GM10248 (cell line): ENCODE measurements at regions of chr22 and their contacts with region 1.

Region 1: GRCh38 chr22:42889304-42889703 is 32.2 kb upstream of the ARFGAP3 start:
- DNase-seq: peak; percentile 86
- CTCF ChIP-seq: no peak

Region 2: DNA sequence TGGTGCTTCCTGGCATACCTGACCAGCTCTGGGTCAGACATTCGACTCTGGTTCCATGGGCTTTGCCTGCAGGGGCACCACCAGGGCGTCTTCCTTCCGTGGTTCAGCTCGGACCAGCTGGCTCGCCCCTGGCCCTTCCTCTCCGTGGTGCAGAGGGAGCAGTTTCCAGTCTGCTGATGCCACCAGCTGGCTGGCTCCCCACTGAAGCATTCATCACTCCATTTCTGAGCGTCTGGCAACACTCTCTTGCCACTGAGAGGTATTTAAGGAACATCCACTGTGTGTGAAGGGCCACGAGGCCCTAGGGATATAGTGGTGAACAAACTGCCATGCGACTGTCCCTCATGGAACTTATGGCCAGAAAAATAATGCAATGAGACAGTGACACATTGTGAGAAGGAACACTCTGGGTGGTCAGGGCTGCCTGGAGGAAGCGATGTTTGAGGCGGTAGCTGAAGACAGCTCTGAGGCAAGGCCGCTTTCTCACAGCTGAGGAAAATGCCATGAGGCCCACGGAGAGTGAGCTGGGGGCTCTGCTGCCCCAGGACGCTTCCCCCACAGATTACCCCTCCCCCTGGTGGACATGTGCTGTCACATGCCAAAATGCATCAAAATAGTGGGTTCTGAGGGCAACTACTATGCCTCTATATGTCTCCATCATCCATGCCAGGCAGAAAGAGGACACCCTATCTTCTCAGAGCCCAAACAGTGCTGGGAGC is 12.6 kb after region 1 on chr22:
- CTCF ChIA-PET with region 1: interaction called, 84 read pairs
- POLR2A ChIA-PET with region 1: no interaction called
- DNase-seq: no peak
- CTCF ChIP-seq: peak; percentile 27

Region 3: DNA sequence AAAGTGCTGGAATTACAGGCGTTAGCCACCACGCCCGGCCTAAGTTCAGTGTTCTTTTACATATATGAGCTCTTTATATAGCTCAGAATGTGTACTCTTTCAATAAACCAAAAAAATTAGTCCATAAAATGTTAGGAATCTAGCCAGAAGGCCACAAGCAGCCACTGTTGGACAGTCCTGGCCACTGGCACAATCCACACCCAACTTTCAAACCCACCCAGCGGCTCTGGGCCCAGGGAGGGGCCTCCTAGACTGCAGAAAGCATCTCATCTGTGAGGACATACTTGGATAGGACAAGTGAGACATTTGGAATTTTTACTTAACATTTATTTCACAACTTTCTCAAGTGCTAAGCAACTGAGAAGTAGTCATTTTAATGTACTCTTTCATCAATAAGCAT is 119.2 kb after region 1 on chr22:
- CTCF ChIA-PET with region 1: no interaction called
- POLR2A ChIA-PET with region 1: no interaction called
- DNase-seq: no peak
- CTCF ChIP-seq: no peak